ENCODE measurements at regions of chr11 and their contacts with region 1.

Region 1: DNA sequence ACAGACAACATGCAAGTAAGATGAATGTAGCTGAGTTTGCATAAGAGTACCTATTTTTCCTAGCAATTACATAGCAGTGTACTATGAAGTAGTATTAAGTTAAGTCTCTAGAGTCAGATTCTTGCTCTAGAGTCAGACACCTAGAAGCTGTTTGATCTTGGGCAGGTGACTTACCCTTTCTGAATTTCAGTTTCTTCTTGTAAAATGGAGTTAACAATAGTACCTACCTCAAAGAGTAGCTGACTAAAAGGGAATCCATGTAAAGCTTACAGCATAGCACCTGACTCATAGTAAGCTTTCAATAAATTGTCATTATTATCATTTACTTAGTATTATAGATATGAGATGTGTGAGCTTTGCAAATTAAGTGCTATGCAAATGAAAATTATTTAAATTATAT is 47.8 kb upstream of the PTPRJ start:
- DNase-seq: no peak
- ATAC-seq: no peak
- H3K4me3 ChIP-seq: no peak overlapping the region
- H3K27ac ChIP-seq: no peak overlapping the region
- H3K4me1 ChIP-seq: peaks cover 9% of the 10 kb centered on the region
- H3K27me3 ChIP-seq: no peaks in the 10 kb centered on the region
- CTCF ChIP-seq: no peak

Region 2: GRCh38 chr11:48103621-48104562 is 171.3 kb after region 1 on chr11:
- intact Hi-C with region 1: no loop called
- DNase-seq: no peak
- ATAC-seq: no peak
- H3K4me3 ChIP-seq: no peak overlapping the region
- H3K27ac ChIP-seq: no peak overlapping the region
- H3K4me1 ChIP-seq: peaks cover 19% of the 10 kb centered on the region
- H3K27me3 ChIP-seq: no peaks in the 10 kb centered on the region
- CTCF ChIP-seq: no peak

Region 3: GRCh38 chr11:48116437-48117228 is 184.1 kb after region 1 on chr11:
- intact Hi-C with region 1: loop called (anchors 10 kb)
- DNase-seq: no peak
- ATAC-seq: no peak
- H3K4me3 ChIP-seq: no peak overlapping the region
- H3K27ac ChIP-seq: no peak overlapping the region
- H3K4me1 ChIP-seq: no peaks in the 10 kb centered on the region
- H3K27me3 ChIP-seq: no peaks in the 10 kb centered on the region
- CTCF ChIP-seq: peak; percentile 28

Measured in lower lobe of right lung (tissue), 2 donors.